Heart right ventricle (tissue), 16 donors: ENCODE measurements at regions of chr9 and their contacts with region 1.

Region 1: DNA sequence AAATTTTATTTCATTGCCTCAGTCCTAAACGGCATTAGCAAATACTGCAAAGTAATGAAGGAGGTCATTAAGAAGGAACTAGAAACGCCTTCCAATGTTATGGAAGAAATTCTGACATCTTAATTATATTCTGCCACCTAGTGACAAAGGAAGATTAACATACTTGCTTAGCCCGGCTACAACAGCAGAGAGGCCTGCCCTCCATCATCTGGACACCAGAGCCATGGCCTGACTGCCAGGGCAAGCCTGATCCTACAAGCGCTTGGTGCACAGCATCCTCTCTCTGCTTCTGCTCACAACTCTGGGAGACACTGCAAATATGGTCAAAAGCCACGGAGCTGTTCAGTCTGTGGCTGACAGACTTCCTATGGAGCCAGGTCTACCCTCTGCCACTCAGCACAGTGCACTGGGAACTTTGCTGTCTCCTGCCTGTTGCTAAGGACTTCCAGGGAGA is 87.3 kb upstream of the SLC44A1 start:
- DNase-seq: peak; percentile 42 to 50
- ATAC-seq: peak; percentile 86 to 93 (median 88)
- H3K4me3 ChIP-seq: no peak overlapping the region
- H3K27ac ChIP-seq: peak overlapping the region in 2 of 10 donors; percentile 2 to 7
- H3K4me1 ChIP-seq: peaks cover 0 to 32% (median 4%) of the 10 kb centered on the region in 9 donors
- H3K27me3 ChIP-seq: no peaks in the 10 kb centered on the region
- CTCF ChIP-seq: peak in 8 of 9 donors; percentile 49 to 73 (median 64)

Region 2: GRCh38 chr9:104863180-104863883 is 293.8 kb before region 1 on chr9:
- intact Hi-C with region 1: loop called (anchors 1 to 10 kb)
- DNase-seq: peak in 1 of 2 donors; percentile 50
- ATAC-seq: peak; percentile 63 to 75 (median 73)
- H3K4me3 ChIP-seq: no peak overlapping the region
- H3K27ac ChIP-seq: peak overlapping the region in 4 of 10 donors; percentile 10 to 66 (median 34)
- H3K4me1 ChIP-seq: peaks cover 6 to 82% (median 35%) of the 10 kb centered on the region in 9 donors
- H3K27me3 ChIP-seq: no peaks in the 10 kb centered on the region
- CTCF ChIP-seq: peak; percentile 38 to 89 (median 77)

Region 3: DNA sequence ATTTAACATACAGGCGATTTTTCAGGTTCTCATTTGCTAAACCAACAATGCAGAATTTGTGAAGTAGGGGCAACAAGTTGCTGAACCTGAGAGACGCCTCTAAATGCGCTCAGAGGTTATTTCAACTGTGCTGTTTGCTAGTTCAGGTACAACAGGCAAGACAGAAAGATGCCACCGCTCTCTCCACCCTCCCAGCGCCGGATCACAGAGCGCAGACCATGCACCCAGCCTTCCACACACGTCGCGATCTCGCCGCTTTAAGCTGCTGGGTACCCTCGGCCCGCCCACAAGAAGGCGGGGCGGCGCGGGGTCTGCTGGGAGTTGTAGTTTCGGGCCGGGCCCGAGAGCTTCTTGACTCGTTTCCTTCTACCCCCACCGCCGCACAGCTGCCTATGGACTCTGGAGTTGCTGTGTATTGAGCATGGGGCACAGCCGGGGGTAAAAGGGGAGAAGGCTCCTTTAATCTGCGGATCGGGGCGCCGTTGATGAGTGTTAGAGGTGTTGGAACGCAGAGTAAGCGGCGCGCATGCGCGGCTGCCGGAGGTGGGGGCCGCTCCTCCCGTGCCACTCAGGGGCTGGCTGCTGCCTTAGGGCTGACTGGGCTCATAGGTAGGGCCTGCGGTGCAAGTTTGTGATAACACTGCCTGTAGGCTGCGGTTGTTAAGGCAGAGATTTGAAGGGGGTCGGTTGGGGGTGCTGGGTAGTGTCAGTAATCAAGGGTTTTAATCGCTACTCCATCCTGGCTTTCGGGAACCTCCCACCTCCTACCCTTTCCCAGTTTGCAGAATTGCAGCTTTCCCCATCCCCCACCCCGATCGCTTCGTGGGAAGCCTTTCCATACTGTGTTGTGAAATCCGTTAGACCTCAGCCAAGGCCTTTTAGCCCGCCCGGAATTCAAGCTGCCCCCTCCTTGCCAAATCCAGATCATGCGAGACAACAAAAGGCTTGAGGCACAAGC is 188.9 kb before region 1 on chr9:
- intact Hi-C with region 1: loop called in 7 of 10 experiments (anchors 5 to 10 kb)
- DNase-seq: peak; percentile 89 to 90
- ATAC-seq: peak; percentile 95 to 98 (median 97)
- H3K4me3 ChIP-seq: peak overlapping the region; percentile 65 to 93 (median 75)
- H3K27ac ChIP-seq: peak overlapping the region; percentile 84 to 98 (median 92)
- H3K4me1 ChIP-seq: peaks cover 0 to 25% (median 9%) of the 10 kb centered on the region in 9 donors
- H3K27me3 ChIP-seq: no peaks in the 10 kb centered on the region
- CTCF ChIP-seq: no peak

Region 4: DNA sequence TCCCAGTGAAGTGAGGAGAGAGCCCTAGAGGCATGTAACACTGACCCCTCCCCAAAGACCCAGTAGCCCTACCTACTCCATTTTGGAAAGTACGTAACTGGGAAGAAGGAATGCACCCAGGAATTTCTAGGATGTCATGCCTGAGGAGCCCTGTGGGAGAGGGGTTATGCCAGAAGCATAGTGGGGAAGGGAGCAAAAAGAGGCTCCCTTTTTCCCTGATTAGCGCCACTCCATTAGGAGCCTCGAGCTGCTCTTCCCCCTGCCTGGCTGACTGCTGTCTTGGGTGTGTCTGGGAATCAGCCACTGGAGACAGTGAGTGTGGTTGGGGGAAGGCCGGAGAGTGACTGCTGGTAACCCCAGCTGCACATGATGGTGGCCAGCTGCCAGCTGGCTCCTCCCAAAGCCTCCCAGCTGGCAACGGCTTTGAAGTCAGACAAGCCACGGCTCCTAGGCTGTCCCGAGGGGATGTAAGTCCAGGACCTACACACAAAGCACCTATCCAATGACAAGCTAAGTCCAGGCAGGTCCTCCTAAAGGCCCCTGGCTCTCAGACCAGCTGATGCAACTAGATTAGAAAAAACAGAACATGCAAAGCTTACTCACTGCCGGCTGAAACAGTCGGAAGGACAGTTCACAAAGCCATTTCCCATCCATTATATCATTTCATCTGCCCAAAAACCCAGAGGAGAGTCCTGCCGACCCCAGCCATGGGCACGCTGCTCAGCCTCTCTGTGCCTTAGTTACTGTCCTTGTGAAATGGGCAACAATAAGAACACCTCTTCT is 92.7 kb before region 1 on chr9:
- intact Hi-C with region 1: loop called in 2 of 10 experiments (anchors 5 to 10 kb)
- DNase-seq: peak; percentile 89 to 90
- ATAC-seq: peak; percentile 96 to 98 (median 97)
- H3K4me3 ChIP-seq: peak overlapping the region in 4 of 10 donors; percentile 3 to 26 (median 14)
- H3K27ac ChIP-seq: peak overlapping the region; percentile 10 to 93 (median 76)
- H3K4me1 ChIP-seq: peaks cover 11 to 54% (median 24%) of the 10 kb centered on the region in 9 donors
- H3K27me3 ChIP-seq: no peaks in the 10 kb centered on the region
- CTCF ChIP-seq: peak in 2 of 9 donors; percentile 9 to 11

Region 5: DNA sequence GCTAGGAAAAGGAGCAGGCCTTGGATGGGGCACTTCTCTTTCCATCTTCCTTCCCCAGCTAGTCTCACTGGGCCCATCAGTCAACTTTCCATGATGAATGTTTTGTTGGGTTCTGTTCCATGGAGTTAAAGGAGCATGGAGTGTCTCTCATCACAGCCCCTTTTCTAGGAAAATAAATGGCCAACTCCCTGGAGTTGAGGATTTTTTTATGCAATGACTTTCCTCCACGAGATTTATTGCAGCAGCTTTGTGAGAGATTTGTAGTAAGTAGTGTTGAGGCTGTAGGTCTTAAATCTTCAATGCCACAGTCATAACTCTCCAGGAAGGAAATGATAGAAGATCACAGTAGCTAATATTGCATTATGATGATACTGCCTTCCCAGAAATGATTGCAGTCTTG is 41.7 kb after region 1 on chr9:
- intact Hi-C with region 1: no loop called
- DNase-seq: no peak
- ATAC-seq: no peak
- H3K4me3 ChIP-seq: no peak overlapping the region
- H3K27ac ChIP-seq: no peak overlapping the region
- H3K4me1 ChIP-seq: peaks cover 0 to 11% (median 0%) of the 10 kb centered on the region in 9 donors
- H3K27me3 ChIP-seq: no peaks in the 10 kb centered on the region
- CTCF ChIP-seq: no peak

Region 6: GRCh38 chr9:105355781-105356180 is 198.6 kb after region 1 on chr9:
- intact Hi-C with region 1: no loop called
- DNase-seq: no peak
- ATAC-seq: no peak
- H3K4me3 ChIP-seq: no peak overlapping the region
- H3K27ac ChIP-seq: no peak overlapping the region
- H3K4me1 ChIP-seq: no peaks in the 10 kb centered on the region
- H3K27me3 ChIP-seq: no peaks in the 10 kb centered on the region
- CTCF ChIP-seq: no peak